Naive thymus-derived CD4-positive, alpha-beta T cell (primary cell): ENCODE measurements at regions of chr11 and their contacts with region 1.

Region 1: DNA sequence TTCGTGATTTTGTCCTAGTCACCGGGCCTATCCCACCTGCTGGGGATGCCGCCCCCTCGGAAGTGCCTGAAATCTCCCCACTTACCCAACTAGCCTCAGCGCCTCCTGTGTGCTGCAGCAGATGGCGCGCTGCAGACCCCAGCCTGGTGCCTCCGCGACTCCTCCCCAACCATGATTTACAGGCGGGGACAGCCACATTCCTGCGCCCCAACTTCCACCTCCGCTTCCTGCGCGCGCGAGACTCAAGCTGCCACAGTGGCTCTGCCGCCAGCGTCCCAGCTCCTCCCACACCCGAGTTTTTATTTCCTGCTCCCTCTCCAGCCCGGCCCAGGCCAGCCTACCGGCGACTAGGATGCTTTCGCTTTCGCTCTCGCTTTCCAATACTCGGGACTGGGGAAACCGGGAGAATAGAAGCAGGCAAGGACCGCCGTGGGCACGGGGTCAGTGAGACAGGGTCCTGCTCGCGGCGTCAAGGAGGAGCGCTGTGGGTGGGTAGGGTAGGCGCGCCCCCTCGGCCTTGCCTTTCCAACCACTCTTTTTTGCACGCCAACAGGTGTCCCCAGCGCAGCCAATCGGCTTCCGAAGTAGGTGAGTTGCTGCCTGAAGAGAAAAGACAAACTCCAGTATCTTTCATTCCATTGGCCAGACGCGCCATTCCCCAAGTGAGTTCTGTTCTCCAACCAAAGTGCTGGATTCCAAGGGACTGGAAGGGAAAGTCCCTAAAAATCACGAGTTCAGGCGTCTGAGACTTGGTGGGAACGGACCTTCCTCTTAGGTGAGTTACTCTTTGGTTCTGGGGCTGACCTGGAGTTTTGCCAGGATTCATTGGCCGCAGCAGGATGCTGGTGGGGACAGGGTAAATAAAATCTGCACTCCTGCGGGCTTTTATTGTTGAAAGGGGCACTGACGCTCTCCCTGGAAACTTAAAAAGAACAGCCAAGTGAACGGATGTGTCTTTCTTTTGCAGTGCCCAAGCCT is at the start of gene FAM111A:
- DNase-seq: peak; percentile 68 to 91 (median 89)
- ATAC-seq: peak; percentile 91
- H3K4me3 ChIP-seq: peak within 1 kb of the TSS; percentile 97
- H3K4me3 Mint-ChIP-seq: peak within 1 kb of the TSS; percentile 95 to 100 (median 98)
- H3K27ac ChIP-seq: peak within 1 kb of the TSS; percentile 81
- H3K27ac Mint-ChIP-seq: peak within 1 kb of the TSS; percentile 93 to 99 (median 97)
- H3K4me1 ChIP-seq: peaks cover 19 to 24% of the 10 kb centered on the region in 2 donors
- H3K4me1 Mint-ChIP-seq: peaks cover 42 to 70% (median 53%) of the 10 kb centered on the region in 7 donors
- H3K27me3 ChIP-seq: no peaks in the 10 kb centered on the region
- H3K27me3 Mint-ChIP-seq: no peaks in the 10 kb centered on the region
- total RNA-seq, gene FAM111A: 73.1 to 138 (median 117) TPM

Region 2: DNA sequence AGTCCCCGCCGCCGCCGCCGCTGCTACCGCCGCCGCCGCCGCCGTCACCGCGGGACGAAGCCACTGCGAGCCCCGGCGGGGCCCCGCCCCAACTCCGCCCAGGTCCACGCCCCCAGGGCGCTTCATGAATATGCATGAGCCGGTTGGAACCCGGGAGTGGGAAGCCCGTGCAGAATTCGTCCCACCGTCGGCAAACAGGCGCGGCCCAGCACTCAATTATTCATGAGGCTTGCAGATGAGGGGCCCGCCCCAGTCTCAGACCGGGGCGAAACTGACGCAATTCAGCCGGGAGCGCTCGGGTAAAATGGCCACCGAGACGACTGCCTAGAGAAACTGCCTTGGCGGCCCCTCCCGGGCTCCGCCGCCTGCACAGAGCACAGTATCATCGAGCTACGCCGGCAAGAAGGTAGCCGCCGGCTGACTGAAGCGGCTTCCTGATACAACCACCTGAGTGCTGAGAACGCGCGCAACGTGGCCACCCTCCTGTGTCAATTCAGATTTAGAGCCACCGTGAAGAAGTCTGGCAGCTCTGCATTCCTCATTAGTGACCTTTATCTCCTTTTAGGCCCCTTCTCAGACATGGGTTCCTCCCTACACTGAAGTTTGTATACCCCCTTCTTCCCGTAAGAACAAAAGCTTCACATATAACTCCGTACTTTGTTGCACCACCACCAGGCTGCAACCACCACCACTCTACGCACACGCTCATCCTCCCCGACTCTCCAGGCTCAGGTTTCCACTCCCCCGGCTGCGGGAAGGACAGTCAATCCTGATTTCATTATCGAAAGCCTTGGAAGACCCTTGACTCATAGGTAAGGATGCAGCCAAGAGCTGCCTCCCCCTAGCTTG is 1817.7 kb before region 1 on chr11 and contains the start of gene TNKS1BP1:
- CTCF ChIA-PET with region 1: no interaction called
- POLR2A ChIA-PET with region 1: no interaction called
- intact Hi-C with region 1: loop called (anchors 1 to 10 kb)
- DNase-seq: peak; percentile 84 to 92 (median 90)
- ATAC-seq: peak; percentile 91
- H3K4me3 ChIP-seq: peak within 1 kb of the TSS; percentile 73
- H3K4me3 Mint-ChIP-seq: peak within 1 kb of the TSS; percentile 88 to 95 (median 91)
- H3K27ac ChIP-seq: peak within 1 kb of the TSS; percentile 79
- H3K27ac Mint-ChIP-seq: peak within 1 kb of the TSS; percentile 93 to 98 (median 95)
- H3K4me1 ChIP-seq: peaks cover 8 to 14% of the 10 kb centered on the region in 2 donors
- H3K4me1 Mint-ChIP-seq: peaks cover 30 to 58% (median 51%) of the 10 kb centered on the region in 7 donors
- H3K27me3 ChIP-seq: no peaks in the 10 kb centered on the region
- H3K27me3 Mint-ChIP-seq: no peaks in the 10 kb centered on the region
- total RNA-seq, gene TNKS1BP1: 11.2 to 22.0 (median 15.9) TPM

Region 3: DNA sequence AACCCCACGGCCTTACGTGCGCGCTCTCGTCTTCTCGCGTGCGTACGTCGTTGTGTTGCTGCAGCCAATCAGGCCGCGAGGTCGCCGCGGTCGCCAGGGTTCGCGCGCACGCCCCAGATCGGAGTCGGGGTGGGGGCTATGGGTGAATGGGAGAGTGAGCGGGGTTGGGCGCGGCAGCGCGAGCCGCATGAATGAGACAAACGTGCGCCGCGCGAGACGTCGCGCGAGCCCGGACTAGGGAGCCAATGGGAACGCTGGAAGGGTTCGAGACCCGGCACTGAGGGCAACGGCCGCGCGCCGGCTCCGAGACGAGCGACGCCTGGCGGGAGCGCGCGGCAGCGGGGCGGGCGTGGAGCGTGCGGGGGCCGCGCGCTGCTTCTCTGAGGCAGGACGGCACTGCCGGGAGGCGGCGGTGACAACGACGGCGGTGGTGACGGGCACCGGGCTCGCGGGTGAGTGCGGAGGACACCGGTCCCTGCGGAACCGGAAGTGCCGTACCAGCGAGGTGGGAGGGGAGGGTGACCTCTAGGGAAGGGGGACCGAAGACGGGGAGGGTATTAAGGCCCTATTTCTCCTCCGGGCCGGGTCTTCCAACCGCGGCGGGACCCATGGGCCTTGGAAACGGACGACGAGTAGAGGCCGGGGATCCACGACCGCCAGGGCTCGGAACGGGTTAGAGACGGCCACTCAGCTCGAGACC is 1474.9 kb before region 1 on chr11 and contains the start of gene ZDHHC5:
- CTCF ChIA-PET with region 1: no interaction called
- POLR2A ChIA-PET with region 1: no interaction called
- intact Hi-C with region 1: loop called in 1 of 2 experiments (anchors 1 kb)
- DNase-seq: peak; percentile 92 to 100 (median 100)
- ATAC-seq: peak; percentile 90
- H3K4me3 ChIP-seq: peak within 1 kb of the TSS; percentile 87
- H3K4me3 Mint-ChIP-seq: peak within 1 kb of the TSS; percentile 84 to 100 (median 91)
- H3K27ac ChIP-seq: peak within 1 kb of the TSS; percentile 97
- H3K27ac Mint-ChIP-seq: peak within 1 kb of the TSS; percentile 97 to 100 (median 98)
- H3K4me1 ChIP-seq: peaks cover 25 to 28% of the 10 kb centered on the region in 2 donors
- H3K4me1 Mint-ChIP-seq: peaks cover 35 to 62% (median 50%) of the 10 kb centered on the region in 7 donors
- H3K27me3 ChIP-seq: no peaks in the 10 kb centered on the region
- H3K27me3 Mint-ChIP-seq: no peaks in the 10 kb centered on the region
- total RNA-seq, gene ZDHHC5: 51.4 to 82.2 (median 59.1) TPM

Region 4: DNA sequence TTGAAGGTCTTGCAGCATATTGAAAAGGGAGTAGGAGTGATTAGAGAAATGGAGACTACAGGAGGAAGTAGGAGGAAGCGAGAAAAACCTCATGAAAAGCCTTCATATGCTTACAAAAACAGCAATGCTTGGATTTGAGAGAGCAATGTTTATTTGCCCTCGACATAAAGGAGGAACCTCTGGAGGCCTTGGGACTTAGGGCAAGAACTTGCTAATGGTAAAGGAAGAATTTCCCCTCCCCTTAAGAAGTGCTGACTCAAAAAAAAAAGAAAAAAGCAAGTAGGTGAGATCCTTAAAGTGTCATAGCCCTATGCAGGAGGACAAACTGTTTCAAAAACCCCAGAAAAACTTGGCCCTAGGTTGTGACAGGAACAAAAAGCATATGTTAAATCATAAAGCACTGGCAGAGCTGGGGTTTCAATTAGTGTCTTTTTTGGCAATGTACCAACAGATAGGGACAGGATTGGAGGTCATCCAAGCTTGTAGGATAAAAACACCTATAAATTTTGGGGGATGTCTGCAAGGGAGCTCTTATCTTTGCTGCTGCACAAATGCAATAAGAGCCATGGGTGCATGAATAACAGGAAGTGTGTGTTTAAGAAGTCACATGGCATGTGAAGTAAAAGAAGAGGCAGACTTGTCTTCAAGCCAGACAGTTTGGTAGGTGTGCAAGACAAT is 415.9 kb before region 1 on chr11:
- CTCF ChIA-PET with region 1: no interaction called
- POLR2A ChIA-PET with region 1: no interaction called
- intact Hi-C with region 1: loop called in 1 of 2 experiments (anchors 2 kb)
- DNase-seq: peak in 7 of 9 donors; percentile 39 to 79 (median 73)
- ATAC-seq: peak; percentile 84
- H3K4me3 ChIP-seq: no peak overlapping the region
- H3K4me3 Mint-ChIP-seq: peak overlapping the region; percentile 33 to 86 (median 62)
- H3K27ac ChIP-seq: peak overlapping the region; percentile 60
- H3K27ac Mint-ChIP-seq: peak overlapping the region; percentile 58 to 99 (median 97)
- H3K4me1 ChIP-seq: peaks cover 4 to 41% of the 10 kb centered on the region in 2 donors
- H3K4me1 Mint-ChIP-seq: peaks cover 16 to 67% (median 54%) of the 10 kb centered on the region in 7 donors
- H3K27me3 ChIP-seq: no peaks in the 10 kb centered on the region
- H3K27me3 Mint-ChIP-seq: no peaks in the 10 kb centered on the region

Region 5: GRCh38 chr11:59158206-59159068 is 15.6 kb after region 1 on chr11:
- CTCF ChIA-PET with region 1: interaction called, 26 read pairs
- POLR2A ChIA-PET with region 1: interaction called, 10 read pairs
- intact Hi-C with region 1: loop called (anchors 1 kb)
- DNase-seq: peak in 8 of 9 donors; percentile 53 to 75 (median 70)
- ATAC-seq: peak; percentile 97
- H3K4me3 ChIP-seq: no peak overlapping the region
- H3K4me3 Mint-ChIP-seq: peak overlapping the region in 1 of 10 donors; percentile 18
- H3K27ac ChIP-seq: no peak overlapping the region
- H3K27ac Mint-ChIP-seq: peak overlapping the region in 7 of 9 donors; percentile 8 to 65 (median 50)
- H3K4me1 ChIP-seq: no peaks in the 10 kb centered on the region
- H3K4me1 Mint-ChIP-seq: peaks cover 4 to 16% (median 5%) of the 10 kb centered on the region in 7 donors
- H3K27me3 ChIP-seq: no peaks in the 10 kb centered on the region
- H3K27me3 Mint-ChIP-seq: peaks cover 9 to 14% (median 9%) of the 10 kb centered on the region in 5 donors

Region 6: GRCh38 chr11:59560702-59561469 is 418.1 kb after region 1 on chr11:
- CTCF ChIA-PET with region 1: no interaction called
- POLR2A ChIA-PET with region 1: interaction called, 3 read pairs
- intact Hi-C with region 1: loop called in 1 of 2 experiments (anchors 2 kb)
- DNase-seq: peak; percentile 59 to 82 (median 78)
- ATAC-seq: peak; percentile 85
- H3K4me3 ChIP-seq: peak overlapping the region; percentile 98
- H3K4me3 Mint-ChIP-seq: peak overlapping the region; percentile 81 to 99 (median 96)
- H3K27ac ChIP-seq: peak overlapping the region; percentile 72
- H3K27ac Mint-ChIP-seq: peak overlapping the region; percentile 87 to 99 (median 96)
- H3K4me1 ChIP-seq: peaks cover 20 to 26% of the 10 kb centered on the region in 2 donors
- H3K4me1 Mint-ChIP-seq: peaks cover 27 to 63% (median 51%) of the 10 kb centered on the region in 7 donors
- H3K27me3 ChIP-seq: no peaks in the 10 kb centered on the region
- H3K27me3 Mint-ChIP-seq: peaks cover 0 to 14% (median 0%) of the 10 kb centered on the region in 5 donors

Region 7: GRCh38 chr11:59660621-59661020 is 517.8 kb after region 1 on chr11:
- CTCF ChIA-PET with region 1: no interaction called
- POLR2A ChIA-PET with region 1: no interaction called
- intact Hi-C with region 1: no loop called
- DNase-seq: no peak
- ATAC-seq: peak; percentile 50
- H3K4me3 ChIP-seq: no peak overlapping the region
- H3K4me3 Mint-ChIP-seq: peak overlapping the region in 2 of 10 donors; percentile 1 to 13
- H3K27ac ChIP-seq: no peak overlapping the region
- H3K27ac Mint-ChIP-seq: peak overlapping the region; percentile 0 to 89 (median 13)
- H3K4me1 ChIP-seq: no peaks in the 10 kb centered on the region
- H3K4me1 Mint-ChIP-seq: peaks cover 16 to 49% (median 42%) of the 10 kb centered on the region in 7 donors
- H3K27me3 ChIP-seq: no peaks in the 10 kb centered on the region
- H3K27me3 Mint-ChIP-seq: no peaks in the 10 kb centered on the region

Region 8: GRCh38 chr11:59753650-59754493 is 611.1 kb after region 1 on chr11:
- CTCF ChIA-PET with region 1: no interaction called
- POLR2A ChIA-PET with region 1: no interaction called
- intact Hi-C with region 1: loop called in 1 of 2 experiments (anchors 10 kb)
- DNase-seq: peak; percentile 65 to 84 (median 75)
- ATAC-seq: peak; percentile 80
- H3K4me3 ChIP-seq: peak overlapping the region; percentile 91
- H3K4me3 Mint-ChIP-seq: peak overlapping the region; percentile 90 to 98 (median 95)
- H3K27ac ChIP-seq: peak overlapping the region; percentile 61
- H3K27ac Mint-ChIP-seq: peak overlapping the region; percentile 32 to 88 (median 71)
- H3K4me1 ChIP-seq: peaks cover 8 to 12% of the 10 kb centered on the region in 2 donors
- H3K4me1 Mint-ChIP-seq: peaks cover 11 to 35% (median 23%) of the 10 kb centered on the region in 7 donors
- H3K27me3 ChIP-seq: no peaks in the 10 kb centered on the region
- H3K27me3 Mint-ChIP-seq: peaks cover 6 to 15% (median 10%) of the 10 kb centered on the region in 5 donors